CD8-positive, alpha-beta memory T cell (primary cell): ENCODE measurements at regions of chr16 and their contacts with region 1.

Region 1: GRCh38 chr16:67928561-67929364 is 2.9 kb downstream of the CTRL start:
- DNase-seq: peak; percentile 59 to 81 (median 60)
- H3K4me3 ChIP-seq: no peak overlapping the region
- H3K4me3 Mint-ChIP-seq: no peak overlapping the region
- H3K27ac ChIP-seq: no peak overlapping the region
- H3K27ac Mint-ChIP-seq: peak overlapping the region in 4 of 8 donors; percentile 7 to 79 (median 62)
- H3K4me1 ChIP-seq: no peaks in the 10 kb centered on the region
- H3K4me1 Mint-ChIP-seq: peaks cover 0 to 21% (median 4%) of the 10 kb centered on the region in 3 donors
- H3K27me3 ChIP-seq: no peaks in the 10 kb centered on the region
- H3K27me3 Mint-ChIP-seq: no peaks in the 10 kb centered on the region

Region 2: DNA sequence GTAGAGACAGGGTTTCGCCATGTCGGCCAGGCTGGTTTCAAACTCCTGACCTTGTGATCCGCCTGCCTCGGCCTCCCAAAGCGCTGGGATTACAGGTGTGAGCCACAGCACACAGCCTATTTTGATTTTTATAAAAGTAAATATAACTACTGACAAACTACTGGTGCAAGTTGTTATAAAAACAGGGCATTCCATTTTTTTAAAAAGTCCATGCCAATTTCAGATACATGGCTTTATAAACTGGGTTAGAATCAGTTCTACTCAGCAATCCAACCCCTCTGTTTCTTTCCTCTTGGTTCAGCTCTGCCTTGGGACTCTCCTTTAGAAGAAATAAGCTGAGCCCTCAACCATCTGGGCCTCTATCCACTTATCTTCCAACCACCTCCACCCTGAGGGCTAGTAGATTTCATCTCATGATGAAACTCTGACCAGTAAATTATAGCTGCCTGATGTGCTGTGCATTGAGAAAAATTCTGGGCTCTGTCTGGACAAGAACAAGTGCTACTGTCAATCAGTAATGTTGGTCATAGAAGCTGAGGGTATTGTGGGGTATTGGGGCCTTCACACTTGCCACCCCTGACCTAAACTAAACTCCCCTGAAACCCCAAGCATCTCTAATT is 132.6 kb before region 1 on chr16:
- CTCF ChIA-PET with region 1: no interaction called
- POLR2A ChIA-PET with region 1: no interaction called
- DNase-seq: no peak
- H3K4me3 ChIP-seq: no peak overlapping the region
- H3K4me3 Mint-ChIP-seq: no peak overlapping the region
- H3K27ac ChIP-seq: no peak overlapping the region
- H3K27ac Mint-ChIP-seq: peak overlapping the region in 4 of 8 donors; percentile 37 to 87 (median 78)
- H3K4me1 ChIP-seq: peaks cover 13% of the 10 kb centered on the region
- H3K4me1 Mint-ChIP-seq: peaks cover 33 to 48% (median 44%) of the 10 kb centered on the region in 3 donors
- H3K27me3 ChIP-seq: no peaks in the 10 kb centered on the region
- H3K27me3 Mint-ChIP-seq: no peaks in the 10 kb centered on the region

Region 3: DNA sequence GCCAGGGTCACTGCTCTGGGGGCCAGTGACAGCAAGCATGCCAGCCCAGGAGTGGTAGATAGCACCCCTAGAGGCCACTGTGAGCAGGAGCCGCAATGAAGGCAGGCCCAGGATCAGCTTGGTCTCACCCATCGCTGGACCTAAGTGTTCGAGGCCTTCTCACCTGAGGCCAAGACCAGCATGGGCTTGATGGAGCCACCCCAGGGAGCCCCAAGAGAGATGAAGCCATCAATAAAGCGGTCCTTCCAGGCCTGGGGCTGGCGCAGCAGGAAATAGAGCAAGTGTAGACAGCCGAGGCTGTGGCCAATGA is 13.4 kb after region 1 on chr16:
- CTCF ChIA-PET with region 1: interaction called, 21 read pairs
- POLR2A ChIA-PET with region 1: no interaction called
- DNase-seq: peak in 1 of 5 donors; percentile 22
- H3K4me3 ChIP-seq: no peak overlapping the region
- H3K4me3 Mint-ChIP-seq: no peak overlapping the region
- H3K27ac ChIP-seq: no peak overlapping the region
- H3K27ac Mint-ChIP-seq: peak overlapping the region in 3 of 8 donors; percentile 61 to 86 (median 73)
- H3K4me1 ChIP-seq: peaks cover 34% of the 10 kb centered on the region
- H3K4me1 Mint-ChIP-seq: peaks cover 19 to 32% (median 23%) of the 10 kb centered on the region in 3 donors
- H3K27me3 ChIP-seq: no peaks in the 10 kb centered on the region
- H3K27me3 Mint-ChIP-seq: no peaks in the 10 kb centered on the region

Region 4: DNA sequence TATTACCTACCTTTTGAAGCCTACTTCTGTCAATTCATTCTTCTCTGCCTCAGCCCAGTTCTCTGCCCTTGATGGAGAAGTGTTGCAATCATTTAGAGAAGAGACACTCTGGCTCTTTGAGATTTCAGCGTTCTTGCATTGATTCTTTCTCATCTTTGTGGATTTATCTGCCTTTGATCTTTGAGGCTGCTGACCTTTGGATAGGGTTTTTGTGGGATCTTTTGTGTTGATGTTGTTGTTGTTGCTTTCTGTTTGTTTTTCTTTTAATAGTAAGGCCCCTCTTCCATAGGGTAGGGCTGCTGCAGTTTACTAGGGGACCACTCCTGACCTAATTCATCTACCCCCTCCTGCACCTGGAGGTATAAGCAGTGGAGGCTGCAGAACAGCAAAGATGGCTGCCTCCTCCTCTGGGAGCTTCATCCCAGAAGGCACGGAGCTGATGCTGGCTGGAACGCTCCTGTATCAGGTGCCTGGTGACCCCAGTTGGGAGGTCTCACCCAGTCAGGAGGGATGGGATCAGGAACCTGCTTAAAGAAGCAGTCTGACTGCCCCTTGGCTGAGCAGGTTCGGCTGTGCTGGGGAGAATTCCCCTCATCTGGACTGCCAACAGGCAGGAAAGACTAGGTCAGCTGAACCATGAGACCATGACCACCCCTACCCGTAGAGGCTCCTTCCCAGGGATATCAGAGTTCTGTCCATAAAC is 184.4 kb after region 1 on chr16:
- CTCF ChIA-PET with region 1: no interaction called
- POLR2A ChIA-PET with region 1: no interaction called
- DNase-seq: no peak
- H3K4me3 ChIP-seq: no peak overlapping the region
- H3K4me3 Mint-ChIP-seq: peak overlapping the region in 5 of 7 donors; percentile 10 to 68 (median 31)
- H3K27ac ChIP-seq: no peak overlapping the region
- H3K27ac Mint-ChIP-seq: peak overlapping the region in 6 of 8 donors; percentile 0 to 96 (median 48)
- H3K4me1 ChIP-seq: peaks cover 64% of the 10 kb centered on the region
- H3K4me1 Mint-ChIP-seq: peaks cover 85 to 93% (median 92%) of the 10 kb centered on the region in 3 donors
- H3K27me3 ChIP-seq: no peaks in the 10 kb centered on the region
- H3K27me3 Mint-ChIP-seq: no peaks in the 10 kb centered on the region